MCF 10A (cell line): ENCODE measurements at regions of chr10 and their contacts with region 1.

Region 1: DNA sequence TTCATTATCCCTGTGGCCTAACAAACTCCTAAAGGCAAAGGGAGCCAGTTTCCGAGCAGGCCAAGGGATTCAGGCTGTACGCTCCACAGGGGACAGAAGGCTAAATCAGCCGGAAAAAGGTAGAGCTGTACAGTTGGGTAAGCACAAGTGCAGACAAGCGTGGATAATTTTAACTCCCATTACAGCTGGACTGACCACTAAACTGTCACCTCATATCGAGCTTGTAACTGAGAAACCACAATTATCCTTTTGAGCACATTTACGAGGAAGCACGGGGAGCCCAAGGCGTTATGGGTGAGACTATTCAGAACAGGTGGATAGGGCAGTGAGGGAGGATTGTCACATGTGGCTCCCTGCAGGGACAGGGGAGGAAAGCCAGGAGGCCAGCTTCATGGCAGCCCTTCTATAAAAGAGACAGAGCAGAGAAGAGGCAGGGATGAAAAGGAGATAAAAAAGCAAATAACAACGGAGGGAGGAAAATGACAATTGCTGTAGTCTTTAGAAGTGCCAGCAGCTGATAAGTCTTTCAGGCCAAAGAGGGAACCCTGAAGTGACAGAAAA is 288.0 kb downstream of the FGFR2 start:
- DNase-seq: no peak
- H3K4me3 Mint-ChIP-seq: no peak overlapping the region
- H3K27ac Mint-ChIP-seq: no peak overlapping the region
- H3K4me1 Mint-ChIP-seq: peaks cover 17% of the 10 kb centered on the region
- H3K27me3 Mint-ChIP-seq: no peaks in the 10 kb centered on the region
- CTCF ChIP-seq: no peak

Region 2: DNA sequence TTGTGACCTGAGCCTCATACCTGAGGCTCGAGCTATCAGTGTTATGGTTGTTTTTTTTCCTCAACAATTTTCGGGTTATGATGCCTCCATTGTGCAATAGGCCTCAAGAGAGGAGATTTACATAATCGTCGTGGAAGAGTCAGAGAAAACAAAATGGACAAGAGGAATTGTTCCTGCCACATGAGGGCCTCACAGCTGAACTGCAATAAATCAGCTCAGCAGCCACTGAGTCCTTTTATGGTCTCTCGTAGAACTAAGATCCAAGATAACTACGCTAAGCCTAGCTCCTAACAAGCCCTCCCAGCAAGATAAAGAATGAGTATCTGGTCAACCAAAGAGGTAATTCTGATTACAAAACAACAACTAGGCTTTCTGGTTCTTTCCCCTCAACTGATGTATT is 122.2 kb before region 1 on chr10:
- CTCF ChIA-PET with region 1: no interaction called
- POLR2A ChIA-PET with region 1: no interaction called
- intact Hi-C with region 1: no loop called
- DNase-seq: peak; percentile 26
- H3K4me3 Mint-ChIP-seq: no peak overlapping the region
- H3K27ac Mint-ChIP-seq: no peak overlapping the region
- H3K4me1 Mint-ChIP-seq: no peaks in the 10 kb centered on the region
- H3K27me3 Mint-ChIP-seq: no peaks in the 10 kb centered on the region
- CTCF ChIP-seq: no peak

Region 3: DNA sequence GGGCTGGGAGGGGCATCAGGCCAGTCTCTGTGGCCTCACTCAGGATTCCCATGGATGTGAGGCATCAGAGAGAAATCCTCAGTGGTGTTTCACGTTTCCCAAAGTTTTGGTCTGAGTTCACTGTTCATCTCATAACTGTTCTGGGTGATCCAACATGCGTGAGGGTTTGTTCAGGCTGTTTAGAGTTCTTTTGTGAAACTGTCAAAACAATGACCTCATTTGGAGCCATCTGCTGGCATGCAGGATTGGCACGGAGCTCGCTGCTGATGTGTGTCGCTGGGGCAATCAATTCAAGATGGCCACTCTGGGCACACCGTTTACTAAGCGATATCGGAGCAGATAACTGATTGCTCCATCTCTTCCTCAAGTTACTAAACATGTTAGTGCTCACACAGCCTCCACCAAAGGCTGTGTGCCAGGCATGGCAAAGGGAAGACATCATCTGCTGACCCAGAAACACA is 93.5 kb before region 1 on chr10:
- CTCF ChIA-PET with region 1: no interaction called
- POLR2A ChIA-PET with region 1: no interaction called
- intact Hi-C with region 1: no loop called
- DNase-seq: no peak
- H3K4me3 Mint-ChIP-seq: no peak overlapping the region
- H3K27ac Mint-ChIP-seq: no peak overlapping the region
- H3K4me1 Mint-ChIP-seq: no peaks in the 10 kb centered on the region
- H3K27me3 Mint-ChIP-seq: no peaks in the 10 kb centered on the region
- CTCF ChIP-seq: no peak

Region 4: DNA sequence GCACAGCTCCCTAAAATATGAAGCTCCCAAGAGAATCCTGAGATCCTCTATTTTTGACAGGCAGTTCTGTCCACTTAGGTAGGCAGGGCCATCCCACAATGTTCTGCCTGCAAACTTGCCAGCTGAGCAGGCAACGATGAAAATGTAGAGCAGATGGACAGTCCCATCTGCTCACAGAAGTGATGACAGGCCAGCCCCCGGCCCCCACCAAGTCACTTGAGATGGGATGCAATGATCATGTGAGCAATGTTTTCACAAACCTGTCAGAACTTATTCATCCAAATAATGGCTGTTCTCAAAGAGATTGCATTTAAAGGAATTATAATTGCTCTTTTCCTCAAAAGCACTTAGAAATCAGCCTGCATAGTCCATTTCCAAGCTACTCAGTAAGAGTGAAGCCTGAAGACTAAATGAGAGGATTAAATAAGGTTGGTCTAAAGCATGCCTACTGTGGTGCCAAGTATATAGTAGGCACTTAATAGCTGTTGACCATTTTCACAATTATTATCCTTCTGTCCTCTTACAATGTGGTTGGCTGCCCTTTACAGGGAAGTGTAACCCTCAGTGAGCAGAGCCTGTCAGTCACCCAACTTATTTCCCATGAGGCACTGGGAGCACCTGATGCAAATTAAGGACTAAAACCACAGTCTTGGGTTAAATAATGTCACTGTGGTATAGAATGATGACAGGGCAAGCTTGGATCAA is 13.2 kb before region 1 on chr10:
- CTCF ChIA-PET with region 1: interaction called, 10 read pairs
- POLR2A ChIA-PET with region 1: no interaction called
- intact Hi-C with region 1: no loop called
- DNase-seq: no peak
- H3K4me3 Mint-ChIP-seq: no peak overlapping the region
- H3K27ac Mint-ChIP-seq: no peak overlapping the region
- H3K4me1 Mint-ChIP-seq: no peaks in the 10 kb centered on the region
- H3K27me3 Mint-ChIP-seq: no peaks in the 10 kb centered on the region
- CTCF ChIP-seq: no peak

Region 5: DNA sequence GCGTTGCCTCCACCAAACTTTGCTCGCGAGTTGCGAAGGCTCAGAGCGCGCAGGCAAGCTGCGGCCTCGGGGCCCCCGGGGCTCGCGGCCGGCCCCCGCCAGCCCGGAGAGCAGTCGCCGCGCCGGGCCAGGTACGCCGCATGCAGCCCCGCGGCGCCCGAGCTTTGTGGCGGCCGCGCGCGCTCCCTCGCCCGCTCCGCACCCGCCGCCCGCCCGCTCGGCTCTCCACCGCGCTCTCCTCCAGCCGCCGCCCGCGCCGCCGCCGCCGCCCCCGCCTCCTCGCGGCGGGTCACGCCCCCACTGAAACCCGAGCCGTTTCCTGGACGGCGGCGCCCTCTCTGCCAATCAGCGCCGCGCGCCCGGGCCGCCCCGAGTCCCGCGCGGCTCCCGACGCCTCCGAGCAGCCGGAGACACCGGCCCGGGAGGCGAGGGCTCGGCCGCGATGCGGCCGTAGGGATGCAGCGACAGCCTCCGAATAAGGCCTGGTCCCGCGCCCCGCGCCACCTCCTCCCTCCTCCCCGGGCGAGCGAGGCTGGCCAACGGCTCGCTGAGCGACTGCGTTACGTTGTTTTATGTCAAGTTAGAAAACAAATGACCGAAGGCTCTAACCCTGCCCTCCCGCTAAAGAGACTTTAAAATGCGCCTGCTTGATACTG is 288.1 kb after region 1 on chr10 and contains the start of gene FGFR2:
- CTCF ChIA-PET with region 1: no interaction called
- POLR2A ChIA-PET with region 1: no interaction called
- intact Hi-C with region 1: loop called (anchors 5 kb)
- DNase-seq: peak; percentile 86
- H3K4me3 Mint-ChIP-seq: peak within 1 kb of the TSS; percentile 76
- H3K27ac Mint-ChIP-seq: no peak within 1 kb of the TSS
- H3K4me1 Mint-ChIP-seq: peaks cover 5% of the 10 kb centered on the region
- H3K27me3 Mint-ChIP-seq: no peaks in the 10 kb centered on the region
- CTCF ChIP-seq: no peak
- total RNA-seq, gene FGFR2: 2.7 and 3.0 TPM in 2 replicates